A549 (cell line): ENCODE measurements at regions of chr2 and their contacts with region 1.

Region 1: DNA sequence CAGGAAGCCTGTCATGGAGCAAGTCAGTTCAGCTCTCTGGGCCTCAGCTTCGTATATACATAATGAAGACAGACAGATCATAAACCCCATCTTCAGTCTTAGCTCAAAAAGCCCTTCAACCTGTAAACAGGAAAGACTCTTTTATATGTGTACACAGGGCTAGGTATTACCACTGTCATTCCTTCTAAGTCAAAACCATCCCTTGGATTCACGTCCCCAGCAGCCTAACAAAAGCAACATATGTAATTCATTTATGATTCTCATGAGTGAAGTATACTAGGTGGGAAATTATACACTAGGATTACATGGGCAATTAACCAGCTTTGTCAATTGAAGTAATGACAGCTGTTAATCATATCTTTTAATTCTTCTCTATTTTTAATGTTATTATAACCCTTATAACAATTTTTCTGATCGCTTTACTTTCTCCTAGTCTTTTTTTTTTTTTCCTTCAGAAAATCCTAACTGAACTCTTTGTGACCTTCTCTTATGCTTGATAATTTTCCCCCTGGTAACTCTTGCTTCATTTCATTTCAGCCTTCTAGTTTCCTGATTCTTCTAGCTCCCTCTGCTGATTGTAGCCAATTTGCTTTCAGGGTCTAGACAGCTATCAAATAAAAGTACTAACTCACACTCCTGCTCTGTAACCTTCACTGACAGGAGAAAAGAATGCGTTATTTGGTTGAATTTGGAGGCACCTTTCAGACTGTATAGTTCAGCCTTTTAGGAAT is 99.7 kb downstream of the RBM43 start:
- DNase-seq: no peak
- ATAC-seq: 0 out of 6 replicates have a peak, but pooled peaks have one; percentile 28 to 47
- H3K4me3 ChIP-seq: no peak overlapping the region
- H3K27ac ChIP-seq: no peak overlapping the region
- H3K4me1 ChIP-seq: no peaks in the 10 kb centered on the region
- CTCF ChIP-seq: peak; percentile 22; the same call in 1 of the 3 replicates
- EP300 ChIP-seq: no peak
- POLR2A ChIP-seq: no peak
- RAD21 ChIP-seq: peak; percentile 27 to 38; a peak in 4 of 5 replicates

Region 2: DNA sequence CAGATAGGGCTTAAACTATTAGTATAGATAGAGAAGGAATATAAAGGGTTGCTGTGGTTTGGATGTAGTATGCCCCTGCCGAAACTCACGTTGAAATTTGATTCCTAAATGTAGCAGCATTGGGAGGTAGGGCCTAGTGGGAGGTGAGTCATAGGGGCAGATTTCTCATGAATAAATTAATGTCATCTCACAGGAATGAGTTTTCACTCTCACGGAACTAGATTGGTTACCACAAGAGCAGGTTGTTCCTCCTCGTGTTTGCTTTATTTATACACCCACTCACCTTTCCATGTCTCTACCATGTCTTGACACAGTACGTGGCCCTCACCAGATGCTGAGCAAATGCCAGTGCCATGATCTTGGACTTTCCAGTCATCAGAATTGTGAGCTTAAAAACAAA is 118.5 kb before region 1 on chr2:
- CTCF ChIA-PET with region 1: no interaction called
- POLR2A ChIA-PET with region 1: no interaction called
- DNase-seq: no peak
- ATAC-seq: no peak
- H3K4me3 ChIP-seq: no peak overlapping the region
- H3K27ac ChIP-seq: no peak overlapping the region
- H3K4me1 ChIP-seq: no peaks in the 10 kb centered on the region
- CTCF ChIP-seq: no peak
- EP300 ChIP-seq: no peak
- POLR2A ChIP-seq: no peak
- RAD21 ChIP-seq: no peak

Region 3: GRCh38 chr2:151238527-151239487 is 76.8 kb after region 1 on chr2:
- CTCF ChIA-PET with region 1: interaction called, 12 read pairs
- POLR2A ChIA-PET with region 1: no interaction called
- DNase-seq: peak; percentile 49 to 62
- ATAC-seq: peak; percentile 83 to 84; a peak in 5 of 6 replicates
- H3K4me3 ChIP-seq: no peak overlapping the region
- H3K27ac ChIP-seq: no peak overlapping the region
- H3K4me1 ChIP-seq: peaks cover 9% of the 10 kb centered on the region; the same call in 1 of the 3 replicates
- CTCF ChIP-seq: peak; percentile 91
- EP300 ChIP-seq: no peak
- POLR2A ChIP-seq: no peak
- RAD21 ChIP-seq: peak; percentile 92 to 96